ENCODE measurements at regions of chr5 and their contacts with region 1.

Region 1: DNA sequence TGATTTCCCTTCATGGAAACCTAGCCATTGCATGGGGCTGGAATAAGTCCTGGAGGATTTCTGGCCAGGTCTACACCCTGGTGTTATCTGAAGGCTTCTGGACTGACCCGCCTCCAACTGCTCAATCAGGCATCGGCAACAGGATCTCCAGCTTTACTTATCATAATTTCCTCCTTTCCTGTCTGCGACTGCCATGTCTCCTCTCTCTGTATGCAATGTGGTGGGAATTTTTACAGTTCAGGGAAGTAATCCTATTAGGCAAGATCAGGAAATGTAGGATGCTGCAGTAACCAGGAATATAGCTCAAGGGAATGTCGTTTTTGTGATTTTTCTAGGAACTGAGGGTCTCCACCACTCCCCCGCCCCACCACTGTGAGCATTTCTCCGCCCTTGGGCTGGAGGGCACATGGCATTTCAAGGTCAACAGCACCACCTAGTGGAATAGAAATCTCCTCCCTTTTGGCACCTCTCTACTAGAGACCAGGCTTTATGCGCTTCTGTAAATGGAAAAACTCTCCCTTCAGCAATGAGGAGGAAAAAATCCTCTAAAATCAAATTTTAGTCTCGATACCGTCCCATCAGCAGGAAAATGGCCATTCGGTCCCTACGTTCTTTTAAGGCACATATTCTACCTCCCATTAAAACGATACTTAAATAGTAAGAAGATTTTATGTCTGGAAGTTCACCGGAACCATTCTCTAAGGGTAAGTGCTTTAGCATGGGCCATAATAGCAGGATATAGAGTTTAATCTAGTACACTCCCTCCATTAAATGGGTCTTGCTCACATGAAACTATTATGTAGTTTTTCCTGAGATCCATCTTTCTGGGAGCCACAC is 93.0 kb downstream of the YTHDC2 start:
- DNase-seq: no peak
- ATAC-seq: peak; percentile 94

Region 2: GRCh38 chr5:112995764-112996618 is 610.5 kb before region 1 on chr5:
- intact Hi-C with region 1: loop called (anchors 5 kb)
- DNase-seq: no peak
- ATAC-seq: peak; percentile 83

Region 3: DNA sequence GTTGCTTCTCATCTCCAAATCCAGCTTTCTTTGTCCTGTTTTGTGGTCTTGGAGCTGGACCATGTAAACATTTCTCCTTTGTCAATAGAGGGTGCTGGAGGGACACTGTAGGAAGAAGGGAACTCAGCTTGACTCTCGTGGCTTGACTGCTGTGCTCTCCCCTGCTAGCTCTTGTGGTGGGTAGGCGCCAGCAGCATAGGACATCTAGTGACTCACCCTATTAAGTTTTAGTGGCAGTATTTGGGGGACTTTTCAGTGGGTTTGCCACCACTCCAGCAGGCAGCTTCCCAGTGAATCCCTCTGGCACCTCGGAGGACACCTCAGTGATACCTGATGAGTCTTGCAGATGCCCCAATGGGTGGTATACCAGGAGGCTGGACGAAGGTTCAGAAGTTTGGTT is 269.5 kb before region 1 on chr5:
- intact Hi-C with region 1: loop called (anchors 5 kb)
- DNase-seq: no peak
- ATAC-seq: peak; percentile 87

Region 4: GRCh38 chr5:113378959-113379541 is 227.5 kb before region 1 on chr5:
- intact Hi-C with region 1: loop called (anchors 2 kb)
- DNase-seq: no peak
- ATAC-seq: peak; percentile 45

Region 5: GRCh38 chr5:114123654-114124053 is 517.1 kb after region 1 on chr5:
- intact Hi-C with region 1: no loop called
- DNase-seq: no peak
- ATAC-seq: no peak